AG04449 (cell line): ENCODE measurements at regions of chr14 and their contacts with region 1.

Region 1: GRCh38 chr14:60151715-60152114 is 13.5 kb downstream of the DHRS7 start:
- DNase-seq: peak; percentile 86
- H3K4me3 ChIP-seq: no peak overlapping the region
- CTCF ChIP-seq: no peak

Region 2: DNA sequence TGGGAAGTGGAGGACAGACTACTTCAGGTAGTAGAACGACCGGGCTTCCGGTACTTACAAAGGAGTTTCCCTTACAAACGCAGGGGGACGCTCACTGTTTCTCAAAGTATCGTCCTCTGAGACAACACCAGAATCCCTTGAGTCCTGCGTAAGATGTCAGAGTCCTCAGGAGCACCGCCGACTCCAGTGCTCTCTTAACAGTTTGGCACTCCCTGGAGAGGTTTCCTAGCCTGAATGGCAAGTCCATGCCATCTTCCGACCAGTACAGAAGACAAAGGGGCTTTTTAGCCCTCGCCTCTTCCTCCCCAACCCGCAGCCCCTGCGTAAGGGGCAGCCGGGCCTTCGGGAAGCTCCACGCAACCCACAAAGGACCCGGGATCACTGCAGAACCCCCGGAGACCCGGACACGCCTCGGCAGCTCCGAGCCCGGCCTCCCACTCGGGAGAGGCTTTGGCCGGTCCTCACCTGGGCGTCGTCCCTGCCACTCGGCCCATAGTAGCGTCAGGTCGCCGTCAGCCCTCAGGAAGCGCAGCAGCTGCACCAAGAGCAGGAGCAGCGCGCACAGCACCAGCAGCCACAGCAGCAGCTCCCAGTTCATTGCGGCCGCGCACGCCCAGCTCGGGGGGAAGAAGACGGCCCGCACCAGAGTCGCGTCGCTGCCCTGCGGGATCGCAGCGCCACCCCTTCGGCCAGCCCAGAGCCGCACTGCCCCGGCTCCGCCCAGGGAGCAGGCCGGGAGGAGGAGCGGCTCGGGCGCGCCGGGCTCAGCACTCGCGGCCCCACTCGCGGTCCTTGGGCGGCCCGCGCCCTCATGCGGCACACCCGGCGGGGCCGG is 13.2 kb after region 1 on chr14 and contains the start of gene DHRS7:
- CTCF ChIA-PET with region 1: interaction called, 26 read pairs
- POLR2A ChIA-PET with region 1: interaction called, 8 read pairs
- DNase-seq: no peak
- H3K4me3 ChIP-seq: peak within 1 kb of the TSS; percentile 91
- CTCF ChIP-seq: peak; percentile 7